Sigmoid colon (tissue), 7 donors: ENCODE measurements at regions of chr14 and their contacts with region 1.

Region 1: GRCh38 chr14:24332268-24332993 is 2.4 kb downstream of the ADCY4 start:
- DNase-seq: peak; percentile 81
- H3K4me3 ChIP-seq: peak overlapping the region in 3 of 4 donors; percentile 9 to 19 (median 16)
- H3K27ac ChIP-seq: no peak overlapping the region
- H3K4me1 ChIP-seq: peaks cover 0 to 36% (median 31%) of the 10 kb centered on the region in 4 donors
- H3K27me3 ChIP-seq: peaks cover 8 to 52% (median 49%) of the 10 kb centered on the region in 3 donors
- CTCF ChIP-seq: peak; percentile 66 to 70 (median 68)
- EP300 ChIP-seq: no peak
- POLR2A ChIP-seq: no peak

Region 2: DNA sequence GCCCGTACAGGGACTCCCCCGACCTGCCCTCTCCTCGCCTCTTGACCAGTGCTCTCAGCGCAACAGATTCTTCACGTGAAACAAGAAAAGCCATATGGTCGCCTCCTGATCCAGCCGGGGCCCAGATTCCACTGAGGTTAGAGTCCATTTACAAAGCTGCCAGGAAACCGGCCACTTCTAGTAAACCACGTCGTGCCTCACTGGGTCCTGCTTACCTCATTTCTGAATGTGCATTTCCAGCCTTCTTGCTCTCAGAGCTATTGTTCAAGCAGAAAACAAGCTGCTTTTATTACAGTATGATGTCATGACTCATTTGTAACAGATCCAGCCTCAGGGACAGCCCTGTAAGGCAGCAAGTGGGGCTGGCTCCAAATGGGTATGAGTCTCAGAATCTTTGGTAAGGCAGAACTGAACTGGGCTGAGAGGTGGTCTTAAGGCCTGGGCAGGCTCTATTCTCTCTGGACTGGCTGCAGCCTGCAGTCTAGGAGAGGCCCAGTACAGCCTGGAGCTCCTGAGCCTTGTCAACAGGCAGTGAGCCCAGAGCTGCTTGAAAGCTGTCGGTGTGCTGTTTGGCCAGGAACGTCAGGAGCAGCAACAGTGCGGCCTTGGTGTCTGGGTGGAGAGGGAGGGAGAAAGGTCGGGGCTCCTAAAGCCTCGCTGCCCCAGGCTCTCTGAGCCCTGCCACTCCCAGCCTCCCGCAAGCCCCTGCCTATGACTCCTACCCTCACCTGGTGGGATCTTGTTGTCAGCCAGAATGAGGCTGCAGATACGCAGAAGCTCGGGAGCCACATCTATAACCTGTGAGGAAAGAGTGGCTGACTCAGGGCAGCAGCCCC is 152.3 kb before region 1 on chr14:
- intact Hi-C with region 1: no loop called
- DNase-seq: no peak
- H3K4me3 ChIP-seq: no peak overlapping the region
- H3K27ac ChIP-seq: peak overlapping the region; percentile 64 to 93 (median 87)
- H3K4me1 ChIP-seq: peaks cover 0 to 20% (median 19%) of the 10 kb centered on the region in 4 donors
- H3K27me3 ChIP-seq: no peaks in the 10 kb centered on the region
- CTCF ChIP-seq: no peak
- EP300 ChIP-seq: peak in 1 of 4 donors; percentile 32
- POLR2A ChIP-seq: no peak

Region 3: DNA sequence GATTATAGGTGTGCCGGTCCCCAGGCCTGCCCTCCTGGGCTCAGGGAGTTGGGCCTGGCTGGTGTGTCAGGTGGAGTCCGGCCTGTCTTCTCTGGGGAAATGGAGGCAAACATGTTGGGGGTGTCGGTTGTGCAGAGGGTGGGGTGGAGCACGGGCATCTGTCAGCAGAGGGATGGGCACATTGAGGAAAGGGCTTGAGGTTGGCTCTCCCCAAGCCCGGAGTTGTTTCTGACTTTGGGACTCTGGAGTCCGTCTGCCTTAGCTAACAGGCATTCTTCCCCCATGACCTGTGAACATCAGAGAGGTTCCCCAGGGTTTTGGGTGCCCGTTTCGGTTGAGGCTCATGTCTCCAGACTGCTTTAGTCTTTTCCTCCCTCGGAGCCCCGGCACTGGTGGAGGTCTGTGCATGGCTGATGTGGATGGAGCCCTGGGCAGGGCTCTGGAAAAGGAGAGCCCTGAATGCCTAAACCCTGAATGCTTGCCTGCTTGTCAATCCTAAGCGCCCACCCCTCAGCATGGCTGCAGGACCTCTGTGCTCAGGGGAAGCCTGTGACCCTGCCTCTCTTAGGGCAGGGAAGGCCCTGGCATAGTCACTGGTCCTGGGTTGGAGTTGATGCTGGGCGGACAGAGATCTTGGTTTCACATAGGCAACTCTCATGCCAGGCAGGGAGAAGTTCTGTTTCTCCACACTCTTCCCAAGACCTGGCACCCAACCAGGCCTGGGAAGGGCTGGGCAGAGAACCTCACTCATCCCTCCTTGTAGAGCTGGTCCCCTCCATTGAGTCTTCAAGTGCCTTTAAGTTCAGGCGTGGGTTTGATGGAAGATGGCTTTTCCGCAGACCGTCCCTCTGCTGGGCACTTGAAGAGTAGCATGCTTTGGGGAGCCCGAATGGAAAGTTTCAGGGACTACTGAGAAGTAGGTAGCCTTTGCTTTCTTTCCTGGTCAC is 79.3 kb after region 1 on chr14:
- intact Hi-C with region 1: loop called (anchors 5 kb)
- DNase-seq: peak; percentile 69
- H3K4me3 ChIP-seq: no peak overlapping the region
- H3K27ac ChIP-seq: no peak overlapping the region
- H3K4me1 ChIP-seq: no peaks in the 10 kb centered on the region
- H3K27me3 ChIP-seq: no peaks in the 10 kb centered on the region
- CTCF ChIP-seq: peak; percentile 25 to 73 (median 61)
- EP300 ChIP-seq: no peak
- POLR2A ChIP-seq: no peak

Region 4: DNA sequence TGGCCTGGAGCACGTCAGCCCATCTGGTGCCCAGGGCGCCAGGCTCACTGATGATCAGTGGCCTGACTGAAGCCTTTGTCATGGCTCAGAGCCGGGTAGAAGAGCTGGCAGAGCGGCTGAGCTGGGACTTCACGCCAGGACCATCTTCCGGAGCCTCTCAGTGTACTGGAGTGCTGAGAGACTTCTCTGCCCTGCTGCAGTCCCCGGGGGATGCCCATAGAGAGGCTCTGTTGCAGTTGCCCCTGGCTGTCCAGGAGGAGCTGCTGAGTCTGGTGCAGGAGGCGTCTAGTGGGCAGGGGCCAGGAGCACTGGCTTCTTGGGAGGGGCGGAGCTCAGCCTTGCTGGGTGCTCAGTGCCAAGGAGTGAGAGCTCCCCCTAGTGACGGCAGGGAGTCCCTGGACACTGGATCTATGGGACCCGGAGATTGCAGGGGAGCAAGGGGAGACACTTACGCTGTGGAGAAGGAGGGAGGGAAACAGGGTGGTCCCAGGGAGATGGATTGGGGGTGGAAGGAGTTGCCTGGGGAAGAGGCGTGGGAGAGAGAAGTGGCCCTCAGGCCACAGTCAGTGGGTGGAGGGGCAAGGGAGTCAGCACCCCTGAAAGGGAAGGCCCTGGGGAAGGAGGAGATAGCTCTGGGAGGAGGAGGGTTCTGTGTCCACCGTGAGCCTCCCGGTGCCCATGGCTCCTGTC is 99.3 kb after region 1 on chr14:
- intact Hi-C with region 1: loop called (anchors 1 kb)
- DNase-seq: peak; percentile 95
- H3K4me3 ChIP-seq: peak overlapping the region; percentile 73 to 87 (median 76)
- H3K27ac ChIP-seq: peak overlapping the region; percentile 94 to 96 (median 95)
- H3K4me1 ChIP-seq: peaks cover 0 to 46% (median 41%) of the 10 kb centered on the region in 4 donors
- H3K27me3 ChIP-seq: no peaks in the 10 kb centered on the region
- CTCF ChIP-seq: peak; percentile 79 to 92 (median 84)
- EP300 ChIP-seq: no peak
- POLR2A ChIP-seq: no peak

Region 5: DNA sequence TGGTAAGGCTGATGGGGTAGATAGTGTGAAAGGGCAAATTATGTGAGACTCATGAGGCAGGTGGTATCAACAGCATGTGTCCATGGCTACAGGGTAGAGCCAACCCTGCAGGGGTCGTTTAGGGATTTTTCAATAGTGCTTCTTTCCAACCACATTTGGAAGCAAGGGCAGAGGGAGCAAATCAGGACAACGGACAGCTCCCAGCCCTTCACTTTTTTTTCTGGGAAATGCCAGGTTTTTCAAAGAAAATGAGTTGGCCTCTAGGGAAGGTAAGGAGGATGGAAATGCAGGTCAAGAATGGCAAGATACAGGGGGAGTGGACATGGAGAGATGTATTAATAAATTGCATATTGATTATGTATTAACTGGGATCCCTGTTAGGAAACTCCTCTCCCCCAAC is 180.6 kb after region 1 on chr14:
- intact Hi-C with region 1: no loop called
- DNase-seq: no peak
- H3K4me3 ChIP-seq: no peak overlapping the region
- H3K27ac ChIP-seq: no peak overlapping the region
- H3K4me1 ChIP-seq: no peaks in the 10 kb centered on the region
- H3K27me3 ChIP-seq: no peaks in the 10 kb centered on the region
- CTCF ChIP-seq: no peak
- EP300 ChIP-seq: no peak
- POLR2A ChIP-seq: no peak

Region 6: DNA sequence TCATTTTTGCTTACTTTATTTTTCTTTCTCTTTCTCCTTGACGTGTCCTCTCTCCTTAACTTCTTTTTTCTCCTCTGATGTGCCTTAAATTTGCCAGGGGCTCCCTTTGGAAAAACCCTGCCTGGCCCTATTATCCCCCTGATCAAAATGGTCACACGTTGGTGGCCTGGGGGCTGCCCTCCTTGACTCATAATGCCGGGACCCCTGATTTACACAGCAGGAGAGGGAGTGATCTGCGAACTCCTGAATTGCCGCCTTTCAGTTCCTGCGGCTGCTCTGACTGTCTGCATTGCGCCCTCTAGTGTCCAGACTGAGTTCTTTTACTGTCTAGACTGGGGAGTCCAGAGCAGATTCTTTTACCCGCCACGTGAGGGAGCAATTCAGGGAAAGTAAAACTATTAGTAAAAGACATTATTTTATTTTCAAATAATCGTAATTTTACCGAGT is 346.4 kb after region 1 on chr14:
- intact Hi-C with region 1: loop called (anchors 10 kb)
- DNase-seq: peak; percentile 72
- H3K4me3 ChIP-seq: peak overlapping the region in 3 of 4 donors; percentile 21 to 41 (median 35)
- H3K27ac ChIP-seq: no peak overlapping the region
- H3K4me1 ChIP-seq: no peaks in the 10 kb centered on the region
- H3K27me3 ChIP-seq: peaks cover 0 to 4% (median 0%) of the 10 kb centered on the region in 3 donors
- CTCF ChIP-seq: peak; percentile 32 to 87 (median 80)
- EP300 ChIP-seq: no peak
- POLR2A ChIP-seq: no peak